Dorsolateral prefrontal cortex (tissue), 120 donors: ENCODE measurements at regions of chr19 and their contacts with region 1.

Region 1: DNA sequence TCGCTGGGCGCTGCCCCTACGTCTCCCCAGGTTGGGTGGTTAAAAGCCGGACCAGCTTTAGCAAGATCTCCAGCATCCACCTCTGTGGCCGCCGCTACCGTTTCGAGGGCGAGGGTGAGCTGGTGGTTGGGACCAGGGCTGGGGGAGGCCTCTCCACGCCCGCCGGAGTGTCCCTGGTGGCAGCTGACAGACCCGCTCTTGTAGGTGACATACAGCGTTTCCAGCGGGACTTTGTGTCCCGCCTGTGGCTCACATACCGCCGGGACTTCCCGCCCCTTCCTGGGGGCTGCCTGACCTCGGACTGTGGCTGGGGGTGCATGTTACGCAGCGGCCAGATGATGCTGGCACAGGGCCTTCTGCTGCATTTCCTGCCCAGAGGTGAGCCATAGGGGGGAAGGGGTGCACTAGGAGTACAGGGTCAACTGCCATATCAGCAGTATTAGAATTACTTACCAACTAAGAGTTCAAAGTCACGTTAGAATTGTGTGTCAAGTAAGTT is 1.1 kb downstream of the ATG4D start:
- DNase-seq: no peak
- H3K4me3 ChIP-seq: peak overlapping the region; percentile 61 to 100 (median 94)
- H3K27ac ChIP-seq: peak overlapping the region in 49 of 59 donors; percentile 3 to 98 (median 92)
- H3K27me3 ChIP-seq: no peaks in the 10 kb centered on the region
- CTCF ChIP-seq: no peak

Region 2: GRCh38 chr19:10412257-10412977 is 132.4 kb before region 1 on chr19:
- intact Hi-C with region 1: no loop called
- DNase-seq: no peak
- H3K4me3 ChIP-seq: no peak overlapping the region
- H3K27ac ChIP-seq: peak overlapping the region in 1 of 59 donors; percentile 28
- H3K27me3 ChIP-seq: peaks cover 0 to 10% (median 2%) of the 10 kb centered on the region in 45 donors
- CTCF ChIP-seq: no peak

Region 3: GRCh38 chr19:10510301-10510802 is 34.5 kb before region 1 on chr19:
- intact Hi-C with region 1: loop called in 1 of 2 experiments (anchors 5 kb)
- DNase-seq: no peak
- H3K4me3 ChIP-seq: no peak overlapping the region
- H3K27ac ChIP-seq: peak overlapping the region in 34 of 59 donors; percentile 9 to 80 (median 49)
- H3K27me3 ChIP-seq: peaks cover 0 to 41% (median 25%) of the 10 kb centered on the region in 45 donors
- CTCF ChIP-seq: peak; percentile 3 to 82 (median 65)

Region 4: GRCh38 chr19:10580979-10581631 is 36.3 kb after region 1 on chr19:
- intact Hi-C with region 1: no loop called
- DNase-seq: peak; percentile 85 to 96 (median 90)
- H3K4me3 ChIP-seq: peak overlapping the region in 45 of 59 donors; percentile 2 to 55 (median 38)
- H3K27ac ChIP-seq: no peak overlapping the region
- H3K27me3 ChIP-seq: no peaks in the 10 kb centered on the region
- CTCF ChIP-seq: peak; percentile 94 to 100 (median 99)